T-cell (primary cell): ENCODE measurements at regions of chr1 and their contacts with region 1.

Region 1: DNA sequence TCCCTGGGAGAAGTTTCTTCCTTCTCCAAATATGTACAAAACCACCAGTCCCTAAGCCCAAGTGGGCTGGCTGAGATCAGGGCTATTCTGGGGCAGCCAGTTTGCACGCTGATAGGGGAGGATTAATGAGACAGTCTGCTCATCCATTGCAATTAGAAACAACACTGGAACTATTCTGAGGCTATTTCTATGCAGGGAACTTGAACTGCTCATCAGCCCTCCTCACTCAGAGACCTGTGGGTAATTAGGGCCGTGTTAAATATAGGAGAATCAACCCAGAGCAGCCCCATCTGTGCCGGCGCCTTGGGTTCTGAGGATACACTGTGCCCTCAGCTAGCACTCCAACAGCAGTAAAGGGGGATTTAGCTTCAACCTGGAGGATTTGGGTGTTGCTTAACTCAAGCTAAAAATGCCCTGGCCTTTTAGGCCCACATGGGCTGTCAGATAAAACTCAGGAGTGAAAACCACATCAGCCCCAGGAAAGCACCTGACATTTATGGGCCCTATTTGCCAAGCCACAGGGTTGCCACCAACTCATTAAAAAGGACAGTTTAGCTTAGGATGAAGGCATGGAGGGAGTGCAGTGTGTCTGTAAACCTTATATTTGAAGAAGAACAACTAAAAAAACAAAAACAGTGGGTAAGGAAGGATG is 53.9 kb downstream of the DUSP10 start:
- DNase-seq: no peak
- ATAC-seq: no peak
- H3K4me3 ChIP-seq: no peak overlapping the region
- H3K4me3 Mint-ChIP-seq: no peak overlapping the region
- H3K27ac ChIP-seq: no peak overlapping the region
- H3K27ac Mint-ChIP-seq: peak overlapping the region in 1 of 2 donors; percentile 71
- H3K4me1 ChIP-seq: peaks cover 0 to 4% of the 10 kb centered on the region in 2 experiments
- H3K4me1 Mint-ChIP-seq: peaks cover 6 to 11% (median 8%) of the 10 kb centered on the region in 3 donors
- H3K27me3 ChIP-seq: no peaks in the 10 kb centered on the region
- H3K27me3 Mint-ChIP-seq: no peaks in the 10 kb centered on the region

Region 2: GRCh38 chr1:221644663-221645258 is 43.2 kb before region 1 on chr1:
- CTCF ChIA-PET with region 1: no interaction called
- POLR2A ChIA-PET with region 1: interaction called in 1 of 2 experiments, 23 read pairs
- DNase-seq: no peak
- ATAC-seq: no peak
- H3K4me3 ChIP-seq: no peak overlapping the region
- H3K4me3 Mint-ChIP-seq: no peak overlapping the region
- H3K27ac ChIP-seq: no peak overlapping the region
- H3K27ac Mint-ChIP-seq: no peak overlapping the region
- H3K4me1 ChIP-seq: no peaks in the 10 kb centered on the region
- H3K4me1 Mint-ChIP-seq: no peaks in the 10 kb centered on the region
- H3K27me3 ChIP-seq: no peaks in the 10 kb centered on the region
- H3K27me3 Mint-ChIP-seq: peaks cover 0 to 4% of the 10 kb centered on the region in 2 donors